Activated CD4-positive, alpha-beta T cell treated with anti-CD3 and anti-CD28 coated beads, Interleukin-2, amount 10 ng/mL, durations not matched to agents 7 days and 5 days (primary cell): ENCODE measurements at regions of chr14 and their contacts with region 1.

Region 1: GRCh38 chr14:106605548-106606448 is 1079.4 kb downstream of the TMEM121 start:
- DNase-seq: peak; percentile 82
- H3K4me3 Mint-ChIP-seq: no peak overlapping the region
- H3K27ac Mint-ChIP-seq: no peak overlapping the region
- H3K4me1 Mint-ChIP-seq: peaks cover 9% of the 10 kb centered on the region
- H3K27me3 Mint-ChIP-seq: peaks cover 56% of the 10 kb centered on the region

Region 2: DNA sequence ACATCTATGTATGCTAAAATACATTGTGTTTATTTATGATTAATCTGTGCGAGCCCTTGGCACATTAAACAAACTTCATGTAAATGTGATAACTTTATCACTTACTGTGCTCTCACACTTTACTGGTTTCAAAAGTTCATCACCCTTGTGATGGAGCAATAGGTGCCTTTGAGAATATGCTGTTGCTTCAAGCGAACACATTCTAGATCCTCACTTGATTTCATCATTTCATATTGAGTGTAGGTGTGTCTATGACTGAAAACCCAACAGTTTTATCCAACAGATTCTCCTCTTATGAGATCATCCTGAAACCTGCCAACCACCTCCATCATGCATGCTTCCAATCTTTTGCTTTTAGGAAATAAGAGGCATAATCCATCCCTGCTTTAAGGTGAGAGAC is 225.1 kb before region 1 on chr14:
- CTCF ChIA-PET with region 1: no interaction called
- POLR2A ChIA-PET with region 1: no interaction called
- DNase-seq: no peak
- H3K4me3 Mint-ChIP-seq: no peak overlapping the region
- H3K27ac Mint-ChIP-seq: no peak overlapping the region
- H3K4me1 Mint-ChIP-seq: no peaks in the 10 kb centered on the region
- H3K27me3 Mint-ChIP-seq: peaks cover 21% of the 10 kb centered on the region

Region 3: DNA sequence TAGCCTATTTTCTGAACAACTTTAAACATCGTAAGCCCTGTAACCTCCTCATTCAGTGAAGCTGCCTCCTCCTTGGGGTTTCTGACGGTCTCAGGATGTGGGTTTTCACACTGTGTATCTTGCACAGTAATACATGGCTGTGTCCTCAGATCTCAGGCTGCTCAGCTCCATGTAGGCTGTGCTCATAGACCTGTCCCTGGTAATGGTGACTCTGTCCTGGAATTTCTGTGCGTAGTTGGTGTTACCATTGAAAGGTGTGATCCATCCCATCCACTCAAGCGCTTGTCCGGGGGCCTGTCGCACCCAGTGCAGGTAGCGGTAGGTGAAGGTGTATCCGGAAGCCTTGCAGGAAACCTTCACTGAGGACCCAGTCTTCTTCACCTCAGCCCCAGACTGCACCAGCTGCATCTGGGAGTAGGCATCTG is 98.9 kb before region 1 on chr14:
- CTCF ChIA-PET with region 1: no interaction called
- POLR2A ChIA-PET with region 1: no interaction called
- DNase-seq: peak; percentile 72
- H3K4me3 Mint-ChIP-seq: peak overlapping the region; percentile 60
- H3K27ac Mint-ChIP-seq: peak overlapping the region; percentile 96
- H3K4me1 Mint-ChIP-seq: peaks cover 59% of the 10 kb centered on the region
- H3K27me3 Mint-ChIP-seq: peaks cover 16% of the 10 kb centered on the region

Region 4: DNA sequence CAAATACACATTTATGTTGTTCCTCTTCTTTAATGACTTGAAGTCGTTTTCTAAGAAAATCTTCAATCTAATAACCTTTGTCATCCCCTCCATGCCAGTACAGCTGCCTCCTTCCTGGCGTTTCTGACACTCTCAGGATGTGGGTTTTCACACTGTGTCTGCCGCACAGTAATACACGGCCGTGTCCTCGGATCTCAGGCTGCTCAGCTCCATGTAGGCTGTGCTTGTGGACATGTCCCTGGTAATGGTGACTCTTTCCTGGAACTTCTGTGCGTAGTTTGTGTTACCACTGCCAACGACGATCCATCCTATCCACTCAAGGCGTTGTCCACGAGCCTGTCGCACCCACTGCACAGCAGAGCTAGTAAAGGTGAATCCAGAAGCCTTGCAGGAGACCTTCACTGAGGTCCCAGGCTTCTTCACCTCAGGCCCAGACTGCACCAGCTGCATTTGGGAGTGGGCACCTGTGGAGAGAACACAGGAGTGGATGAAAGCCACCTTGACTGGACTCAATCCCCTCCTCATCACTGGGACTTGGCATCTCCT is 16.5 kb after region 1 on chr14:
- CTCF ChIA-PET with region 1: interaction called, 15 read pairs
- POLR2A ChIA-PET with region 1: no interaction called
- DNase-seq: peak; percentile 47
- H3K4me3 Mint-ChIP-seq: no peak overlapping the region
- H3K27ac Mint-ChIP-seq: no peak overlapping the region
- H3K4me1 Mint-ChIP-seq: peaks cover 23% of the 10 kb centered on the region
- H3K27me3 Mint-ChIP-seq: peaks cover 54% of the 10 kb centered on the region